Endothelial cell of umbilical vein (primary cell): ENCODE measurements at regions of chr7 and their contacts with region 1.

Region 1: DNA sequence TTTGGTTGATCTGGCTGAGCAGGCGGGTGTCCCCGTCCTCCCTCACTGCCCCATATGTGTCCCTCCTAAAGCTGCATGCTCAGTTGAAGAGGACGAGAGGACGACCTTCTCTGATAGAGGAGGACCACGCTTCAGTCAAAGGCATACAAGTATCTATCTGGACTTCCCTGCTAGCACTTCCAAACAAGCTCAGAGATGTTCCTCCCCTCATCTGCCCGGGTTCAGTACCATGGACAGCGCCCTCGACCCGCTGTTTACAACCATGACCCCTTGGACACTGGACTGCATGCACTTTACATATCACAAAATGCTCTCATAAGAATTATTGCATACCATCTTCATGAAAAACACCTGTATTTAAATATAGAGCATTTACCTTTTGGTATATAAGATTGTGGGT is 26.9 kb upstream of the TRIM56 start:
- DNase-seq: peak; percentile 53
- H3K4me3 ChIP-seq: no peak overlapping the region
- H3K27ac ChIP-seq: no peak overlapping the region
- H3K4me1 ChIP-seq: no peaks in the 10 kb centered on the region
- H3K27me3 ChIP-seq: peaks cover 3 to 5% of the 10 kb centered on the region in 2 experiments
- CTCF ChIP-seq: no peak
- POLR2A ChIP-seq: no peak

Region 2: GRCh38 chr7:100148559-100149350 is 909.6 kb before region 1 on chr7 and contains the start of gene LAMTOR4:
- CTCF ChIA-PET with region 1: no interaction called
- POLR2A ChIA-PET with region 1: no interaction called
- dilution Hi-C with region 1: no loop called
- intact Hi-C with region 1: loop called (anchors 10 kb)
- DNase-seq: peak; percentile 99
- H3K4me3 ChIP-seq: peak within 1 kb of the TSS; percentile 70 to 82 (median 80)
- H3K27ac ChIP-seq: peak within 1 kb of the TSS; percentile 22
- H3K4me1 ChIP-seq: peaks cover 6% of the 10 kb centered on the region
- H3K27me3 ChIP-seq: no peaks in the 10 kb centered on the region
- CTCF ChIP-seq: no peak
- POLR2A ChIP-seq: peak; percentile 45
- total RNA-seq, gene LAMTOR4: 139 and 140 TPM in 2 replicates

Region 3: GRCh38 chr7:100896732-100897608 is 161.4 kb before region 1 on chr7:
- CTCF ChIA-PET with region 1: interaction called, 57 read pairs
- POLR2A ChIA-PET with region 1: no interaction called
- dilution Hi-C with region 1: no loop called
- intact Hi-C with region 1: loop called (anchors 1 kb)
- DNase-seq: no peak
- H3K4me3 ChIP-seq: no peak overlapping the region
- H3K27ac ChIP-seq: no peak overlapping the region
- H3K4me1 ChIP-seq: peaks cover 5% of the 10 kb centered on the region
- H3K27me3 ChIP-seq: peaks cover 9 to 19% of the 10 kb centered on the region in 2 experiments
- CTCF ChIP-seq: peak; percentile 71 to 88
- POLR2A ChIP-seq: no peak

Region 4: DNA sequence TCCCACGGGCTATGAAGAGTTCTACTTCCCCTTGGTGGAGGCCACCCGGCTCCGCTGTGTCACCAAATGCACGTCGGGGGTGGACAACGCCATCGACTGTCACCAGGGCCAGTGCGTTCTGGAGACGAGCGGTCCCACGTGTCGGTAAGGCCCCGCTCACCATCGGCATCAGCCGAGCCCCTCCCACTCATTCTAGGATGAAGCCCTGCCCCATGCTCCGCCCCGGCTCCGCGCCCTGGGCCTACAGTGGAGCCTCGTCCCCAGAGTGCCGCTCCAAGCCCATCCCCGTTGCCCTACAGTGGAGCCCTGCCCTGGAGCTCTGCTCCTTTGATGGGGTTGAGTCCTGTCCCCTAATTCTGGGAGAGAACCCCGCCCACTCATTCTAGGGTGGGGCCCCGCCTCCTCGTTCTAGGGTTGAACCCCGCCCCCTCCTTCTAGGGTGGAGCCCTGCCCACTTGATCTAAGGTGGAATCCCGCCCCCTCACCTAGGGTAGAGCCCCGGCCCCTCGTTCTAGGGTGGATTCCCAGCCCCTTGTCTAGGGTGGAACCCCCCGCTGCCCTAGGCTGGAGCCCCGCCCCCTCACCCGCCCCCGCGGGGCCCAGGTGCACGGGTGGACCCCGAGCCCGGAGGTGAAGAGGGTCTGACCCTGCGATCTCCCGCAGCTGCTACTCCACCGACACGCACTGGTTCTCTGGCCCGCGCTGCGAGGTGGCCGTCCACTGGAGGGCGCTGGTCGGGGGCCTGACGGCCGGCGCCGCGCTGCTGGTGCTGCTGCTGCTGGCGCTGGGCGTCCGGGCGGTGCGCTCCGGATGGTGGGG is 92.4 kb before region 1 on chr7:
- CTCF ChIA-PET with region 1: interaction called, 20 read pairs
- POLR2A ChIA-PET with region 1: no interaction called
- dilution Hi-C with region 1: no loop called
- intact Hi-C with region 1: loop called (anchors 1 kb)
- DNase-seq: peak; percentile 49
- H3K4me3 ChIP-seq: no peak overlapping the region
- H3K27ac ChIP-seq: no peak overlapping the region
- H3K4me1 ChIP-seq: peaks cover 2% of the 10 kb centered on the region
- H3K27me3 ChIP-seq: peaks cover 22 to 28% of the 10 kb centered on the region in 2 experiments
- CTCF ChIP-seq: peak; percentile 92 to 93
- POLR2A ChIP-seq: no peak

Region 5: DNA sequence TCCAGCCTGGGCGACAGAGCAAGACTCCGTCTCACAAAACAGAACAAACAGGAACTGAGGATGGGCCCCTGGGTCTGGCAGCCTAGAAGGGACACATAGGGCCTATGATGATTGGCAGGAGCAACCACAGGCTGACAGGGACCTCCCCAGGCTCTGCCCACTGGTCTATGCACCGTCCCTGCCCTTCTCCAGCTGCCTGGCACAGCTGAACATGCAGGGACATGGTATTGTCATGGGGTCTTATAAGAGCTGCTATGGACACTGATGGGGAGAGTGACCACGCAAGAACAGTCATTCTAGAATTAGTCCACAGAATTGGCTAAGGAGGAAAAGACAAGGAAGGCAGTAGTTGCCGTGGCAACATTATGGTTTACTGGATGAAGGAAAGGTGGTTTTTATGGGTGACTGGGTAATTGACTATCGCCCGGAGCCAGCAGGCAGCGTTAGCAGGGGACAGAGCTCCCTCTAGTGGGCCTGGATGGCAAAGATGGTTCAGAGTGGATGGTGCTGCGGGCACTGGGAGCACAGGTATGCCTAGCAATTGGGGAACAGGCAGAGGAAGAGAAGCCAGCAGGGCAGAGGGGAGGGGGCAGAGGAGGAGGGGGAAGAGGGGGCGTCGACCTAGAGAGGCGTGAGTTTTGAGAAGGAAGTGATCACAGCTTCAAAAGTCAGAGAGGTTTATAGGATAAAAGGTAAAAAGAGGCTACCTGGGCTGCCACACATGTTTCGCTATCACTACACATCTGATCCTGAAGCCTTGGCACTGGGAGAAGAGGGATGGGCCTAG is 19.1 kb after region 1 on chr7:
- CTCF ChIA-PET with region 1: interaction called, 14 read pairs
- POLR2A ChIA-PET with region 1: interaction called, 3 read pairs
- dilution Hi-C with region 1: no loop called
- intact Hi-C with region 1: no loop called
- DNase-seq: peak; percentile 70
- H3K4me3 ChIP-seq: no peak overlapping the region
- H3K27ac ChIP-seq: no peak overlapping the region
- H3K4me1 ChIP-seq: no peaks in the 10 kb centered on the region
- H3K27me3 ChIP-seq: peaks cover under 1 to 4% of the 10 kb centered on the region in 2 experiments
- CTCF ChIP-seq: peak; percentile 88 to 94
- POLR2A ChIP-seq: no peak

Region 6: DNA sequence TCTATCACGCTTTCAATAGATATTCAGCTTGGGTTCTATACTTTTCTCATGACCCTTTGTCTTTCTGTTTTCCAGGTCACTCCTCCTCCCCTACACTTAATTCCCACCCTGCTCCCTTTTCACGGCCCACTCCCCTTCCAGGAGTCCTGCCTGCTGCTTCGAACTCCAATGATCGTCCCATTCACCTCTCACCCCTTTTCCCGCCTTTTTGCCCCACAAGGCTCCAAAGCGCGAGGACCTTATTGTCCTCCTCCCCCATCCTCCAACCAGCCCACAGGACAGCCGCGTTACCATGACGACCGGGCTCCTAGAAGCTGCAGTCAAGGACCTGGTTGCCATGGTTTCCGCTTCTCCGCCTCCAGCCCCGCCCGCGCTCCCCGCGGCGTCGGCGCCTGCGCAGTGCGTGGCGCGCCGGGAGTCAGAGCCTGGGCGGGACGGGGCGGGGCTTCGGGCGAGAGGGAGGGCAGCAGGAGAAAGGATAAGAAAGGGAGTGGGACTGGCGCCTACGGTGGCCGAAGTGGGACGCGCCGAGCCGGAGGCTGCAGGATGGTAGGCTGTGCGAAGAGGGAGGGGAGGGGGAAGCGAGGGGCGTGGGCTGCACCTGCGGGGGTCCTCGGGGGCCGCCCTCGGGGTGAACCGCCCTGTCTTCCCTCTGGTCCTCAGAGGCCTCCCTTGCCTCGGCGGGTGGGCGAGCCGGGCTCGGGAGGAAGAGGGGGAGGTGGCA is 95.8 kb after region 1 on chr7 and contains the start of gene AP1S1:
- CTCF ChIA-PET with region 1: no interaction called
- POLR2A ChIA-PET with region 1: no interaction called
- dilution Hi-C with region 1: no loop called
- intact Hi-C with region 1: no loop called
- DNase-seq: peak; percentile 95
- H3K4me3 ChIP-seq: peak within 1 kb of the TSS; percentile 61 to 84 (median 63)
- H3K27ac ChIP-seq: no peak within 1 kb of the TSS
- H3K4me1 ChIP-seq: peaks cover 6% of the 10 kb centered on the region
- H3K27me3 ChIP-seq: peaks cover 0 to 4% of the 10 kb centered on the region in 2 experiments
- CTCF ChIP-seq: no peak
- POLR2A ChIP-seq: no peak
- total RNA-seq, gene AP1S1: 70.9 and 93.3 TPM in 2 replicates